AG04449 (cell line): ENCODE measurements at regions of chr7 and their contacts with region 1.

Region 1: GRCh38 chr7:14691597-14692203 is 210.9 kb downstream of the DGKB start:
- DNase-seq: no peak
- H3K4me3 ChIP-seq: no peak overlapping the region
- CTCF ChIP-seq: peak; percentile 67

Region 2: GRCh38 chr7:13279854-13280435 is 1411.8 kb before region 1 on chr7:
- CTCF ChIA-PET with region 1: interaction called, 155 read pairs
- POLR2A ChIA-PET with region 1: no interaction called
- DNase-seq: no peak
- H3K4me3 ChIP-seq: no peak overlapping the region
- CTCF ChIP-seq: no peak

Region 3: DNA sequence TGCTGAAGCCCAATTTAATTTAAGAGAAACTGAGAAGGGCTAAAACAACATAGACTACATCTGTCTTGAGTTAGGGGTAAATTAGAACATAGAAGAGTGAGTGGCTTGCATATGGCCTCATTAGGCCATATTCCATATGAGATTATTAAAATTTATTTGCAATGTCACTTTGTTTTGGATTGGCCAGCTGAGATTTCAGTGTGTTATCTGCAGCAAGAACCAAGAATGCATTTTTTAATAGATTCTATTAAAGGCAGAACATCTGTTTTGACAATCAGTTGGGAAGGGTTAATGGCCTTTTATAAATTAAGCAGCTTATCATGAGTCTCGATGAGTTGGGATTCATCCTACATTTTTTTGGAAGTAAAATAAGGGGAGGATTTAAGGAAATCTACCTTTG is 25.4 kb before region 1 on chr7:
- CTCF ChIA-PET with region 1: interaction called, 10 read pairs
- POLR2A ChIA-PET with region 1: no interaction called
- DNase-seq: no peak
- H3K4me3 ChIP-seq: no peak overlapping the region
- CTCF ChIP-seq: no peak

Region 4: DNA sequence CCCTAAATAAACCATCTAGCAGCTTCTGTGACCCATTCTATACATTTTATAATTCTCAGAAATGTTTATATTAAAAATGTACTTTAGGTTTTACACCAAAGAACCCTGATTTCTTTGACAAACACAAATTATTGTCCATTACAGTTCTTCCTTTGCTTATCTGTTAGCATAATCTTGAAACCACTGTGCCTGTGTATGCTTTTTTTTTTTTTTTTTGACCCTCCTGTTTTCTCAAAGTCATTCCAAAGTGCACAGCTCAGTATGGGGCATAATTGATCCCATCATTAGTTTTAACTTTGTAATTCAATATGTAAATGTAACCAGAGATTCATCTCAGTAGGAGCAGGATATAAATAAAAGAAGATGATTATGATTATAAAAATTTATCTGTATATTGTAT is 18.5 kb before region 1 on chr7:
- CTCF ChIA-PET with region 1: interaction called, 23 read pairs
- POLR2A ChIA-PET with region 1: no interaction called
- DNase-seq: no peak
- H3K4me3 ChIP-seq: no peak overlapping the region
- CTCF ChIP-seq: no peak

Region 5: GRCh38 chr7:15015545-15016326 is 324.0 kb after region 1 on chr7:
- CTCF ChIA-PET with region 1: interaction called, 13 read pairs
- POLR2A ChIA-PET with region 1: no interaction called
- DNase-seq: no peak
- H3K4me3 ChIP-seq: peak overlapping the region; percentile 21
- CTCF ChIP-seq: peak; percentile 42